ENCODE measurements at regions of chr12 and their contacts with region 1.

Region 1: GRCh38 chr12:15910864-15911721 is at the start of gene DERA:
- DNase-seq: peak; percentile 91 to 94
- H3K4me3 ChIP-seq: peak within 1 kb of the TSS; percentile 87
- H3K4me3 Mint-ChIP-seq: peak within 1 kb of the TSS; percentile 88
- H3K27ac Mint-ChIP-seq: peak within 1 kb of the TSS; percentile 93
- H3K4me1 ChIP-seq: peaks cover 22% of the 10 kb centered on the region
- H3K4me1 Mint-ChIP-seq: no peaks in the 10 kb centered on the region
- H3K27me3 ChIP-seq: no peaks in the 10 kb centered on the region
- H3K27me3 Mint-ChIP-seq: no peaks in the 10 kb centered on the region
- CTCF ChIP-seq: no peak
- total RNA-seq, gene DERA: 84.3 and 86.4 TPM in 2 replicates

Region 2: GRCh38 chr12:15899282-15899870 is 11.7 kb before region 1 on chr12:
- CTCF ChIA-PET with region 1: interaction called, 17 read pairs
- POLR2A ChIA-PET with region 1: interaction called, 5 read pairs
- intact Hi-C with region 1: loop called (anchors 1 kb)
- DNase-seq: peak in 1 of 2 experiments; percentile 38
- H3K4me3 ChIP-seq: no peak overlapping the region
- H3K4me3 Mint-ChIP-seq: no peak overlapping the region
- H3K27ac Mint-ChIP-seq: no peak overlapping the region
- H3K4me1 ChIP-seq: no peaks in the 10 kb centered on the region
- H3K4me1 Mint-ChIP-seq: no peaks in the 10 kb centered on the region
- H3K27me3 ChIP-seq: no peaks in the 10 kb centered on the region
- H3K27me3 Mint-ChIP-seq: no peaks in the 10 kb centered on the region
- CTCF ChIP-seq: peak; percentile 70 to 88

Region 3: GRCh38 chr12:16030729-16031128 is 119.6 kb after region 1 on chr12:
- CTCF ChIA-PET with region 1: no interaction called
- POLR2A ChIA-PET with region 1: no interaction called
- intact Hi-C with region 1: loop called (anchors 5 kb)
- DNase-seq: peak; percentile 80 to 81
- H3K4me3 ChIP-seq: no peak overlapping the region
- H3K4me3 Mint-ChIP-seq: no peak overlapping the region
- H3K27ac Mint-ChIP-seq: peak overlapping the region; percentile 81
- H3K4me1 ChIP-seq: peaks cover 24% of the 10 kb centered on the region
- H3K4me1 Mint-ChIP-seq: peaks cover 23% of the 10 kb centered on the region
- H3K27me3 ChIP-seq: no peaks in the 10 kb centered on the region
- H3K27me3 Mint-ChIP-seq: no peaks in the 10 kb centered on the region
- CTCF ChIP-seq: no peak